CD4-positive, alpha-beta T cell (primary cell): ENCODE measurements at regions of chr7 and their contacts with region 1.

Region 1: DNA sequence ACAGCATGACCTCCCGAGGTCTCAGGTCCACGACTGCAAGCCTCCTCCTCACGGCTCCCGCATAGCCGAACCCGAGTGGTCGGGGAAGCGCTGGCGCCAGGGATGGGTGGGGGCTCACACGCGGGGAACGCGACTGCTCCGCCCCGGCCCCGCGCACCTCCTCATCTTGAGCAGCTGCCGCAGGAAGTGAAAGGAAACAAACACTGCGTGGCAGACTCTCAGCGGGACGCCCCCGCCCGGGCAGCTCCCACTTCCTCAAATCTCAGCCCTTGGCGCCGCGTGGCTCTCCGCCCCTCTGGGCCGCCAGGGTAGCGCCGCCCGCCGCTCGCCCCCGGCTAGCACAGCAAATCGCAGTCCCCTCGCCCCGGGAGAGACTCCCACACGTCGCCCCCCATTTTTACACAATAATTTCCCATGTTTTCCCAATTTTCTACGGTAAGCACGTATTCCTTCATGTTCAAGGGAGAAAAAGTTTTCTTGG is at the start of gene TMEM243:
- DNase-seq: peak; percentile 71 to 93 (median 82)
- ATAC-seq: peak; percentile 65
- H3K4me3 ChIP-seq: peak within 1 kb of the TSS; percentile 89
- H3K4me3 Mint-ChIP-seq: peak within 1 kb of the TSS; percentile 100
- H3K27ac ChIP-seq: peak within 1 kb of the TSS; percentile 83 to 97
- H3K27ac Mint-ChIP-seq: peak within 1 kb of the TSS; percentile 92
- H3K4me1 ChIP-seq: peaks cover 41% of the 10 kb centered on the region
- H3K4me1 Mint-ChIP-seq: peaks cover 47% of the 10 kb centered on the region
- H3K27me3 ChIP-seq: no peaks in the 10 kb centered on the region
- H3K27me3 Mint-ChIP-seq: no peaks in the 10 kb centered on the region
- CTCF ChIP-seq: peak; percentile 31
- total RNA-seq, gene TMEM243: 158 to 161 TPM

Region 2: GRCh38 chr7:87059525-87060287 is 159.9 kb before region 1 on chr7 and contains the start of gene ELAPOR2:
- CTCF ChIA-PET with region 1: interaction called, 10 read pairs
- POLR2A ChIA-PET with region 1: interaction called, 17 read pairs
- intact Hi-C with region 1: loop called (anchors 5 kb)
- DNase-seq: peak; percentile 61 to 91 (median 76)
- ATAC-seq: peak; percentile 93
- H3K4me3 ChIP-seq: peak within 1 kb of the TSS; percentile 66
- H3K4me3 Mint-ChIP-seq: peak within 1 kb of the TSS; percentile 92
- H3K27ac ChIP-seq: no peak within 1 kb of the TSS
- H3K27ac Mint-ChIP-seq: peak within 1 kb of the TSS; percentile 75
- H3K4me1 ChIP-seq: peaks cover 12% of the 10 kb centered on the region
- H3K4me1 Mint-ChIP-seq: peaks cover 13% of the 10 kb centered on the region
- H3K27me3 ChIP-seq: peaks cover 0 to 3% of the 10 kb centered on the region in 2 experiments
- H3K27me3 Mint-ChIP-seq: peaks cover 13% of the 10 kb centered on the region
- CTCF ChIP-seq: peak; percentile 46
- total RNA-seq, gene ELAPOR2: 7.2 to 7.7 TPM

Region 3: GRCh38 chr7:87188930-87189329 is 30.7 kb before region 1 on chr7:
- CTCF ChIA-PET with region 1: interaction called, 11 read pairs
- POLR2A ChIA-PET with region 1: interaction called, 80 read pairs
- intact Hi-C with region 1: loop called (anchors 2 to 5 kb)
- DNase-seq: no peak
- ATAC-seq: no peak
- H3K4me3 ChIP-seq: no peak overlapping the region
- H3K4me3 Mint-ChIP-seq: no peak overlapping the region
- H3K27ac ChIP-seq: no peak overlapping the region
- H3K27ac Mint-ChIP-seq: peak overlapping the region; percentile 68
- H3K4me1 ChIP-seq: no peaks in the 10 kb centered on the region
- H3K4me1 Mint-ChIP-seq: peaks cover 61% of the 10 kb centered on the region
- H3K27me3 ChIP-seq: no peaks in the 10 kb centered on the region
- H3K27me3 Mint-ChIP-seq: no peaks in the 10 kb centered on the region
- CTCF ChIP-seq: no peak

Region 4: GRCh38 chr7:87345166-87345927 is 125.8 kb after region 1 on chr7 and contains the start of gene CROT:
- CTCF ChIA-PET with region 1: interaction called, 3 read pairs
- POLR2A ChIA-PET with region 1: interaction called, 20 read pairs
- intact Hi-C with region 1: loop called in 1 of 2 experiments (anchors 5 kb)
- DNase-seq: peak; percentile 82 to 96 (median 92)
- ATAC-seq: peak; percentile 96
- H3K4me3 ChIP-seq: peak within 1 kb of the TSS; percentile 75
- H3K4me3 Mint-ChIP-seq: peak within 1 kb of the TSS; percentile 93
- H3K27ac ChIP-seq: peak within 1 kb of the TSS; percentile 73 to 78
- H3K27ac Mint-ChIP-seq: peak within 1 kb of the TSS; percentile 94
- H3K4me1 ChIP-seq: peaks cover 22% of the 10 kb centered on the region
- H3K4me1 Mint-ChIP-seq: peaks cover 69% of the 10 kb centered on the region
- H3K27me3 ChIP-seq: no peaks in the 10 kb centered on the region
- H3K27me3 Mint-ChIP-seq: no peaks in the 10 kb centered on the region
- CTCF ChIP-seq: no peak
- total RNA-seq, gene CROT: 8.5 to 8.6 TPM